Dendritic cell treated with granulocyte-macrophage colony-stimulating factor and Interleukin-4, amounts not matched to agents 40 ng/mL and 50 ng/mL, for 4 days (primary cell): ENCODE measurements at regions of chr2 and their contacts with region 1.

Region 1: GRCh38 chr2:95345566-95346230 is 48.6 kb downstream of the KCNIP3 start:
- H3K4me3 Mint-ChIP-seq: peak overlapping the region; percentile 79
- H3K27ac Mint-ChIP-seq: peak overlapping the region; percentile 32
- H3K4me1 Mint-ChIP-seq: peaks cover 9% of the 10 kb centered on the region
- H3K27me3 Mint-ChIP-seq: peaks cover 58% of the 10 kb centered on the region

Region 2: GRCh38 chr2:95259765-95260417 is 85.8 kb before region 1 on chr2:
- intact Hi-C with region 1: no loop called
- H3K4me3 Mint-ChIP-seq: no peak overlapping the region
- H3K27ac Mint-ChIP-seq: peak overlapping the region; percentile 0
- H3K4me1 Mint-ChIP-seq: peaks cover 33% of the 10 kb centered on the region
- H3K27me3 Mint-ChIP-seq: peaks cover 4% of the 10 kb centered on the region

Region 3: GRCh38 chr2:95402370-95403203 is 56.9 kb after region 1 on chr2 and contains the start of gene FAHD2A:
- intact Hi-C with region 1: loop called (anchors 2 kb)
- H3K4me3 Mint-ChIP-seq: peak within 1 kb of the TSS; percentile 87
- H3K27ac Mint-ChIP-seq: peak within 1 kb of the TSS; percentile 94
- H3K4me1 Mint-ChIP-seq: peaks cover 17% of the 10 kb centered on the region
- H3K27me3 Mint-ChIP-seq: peaks cover 4% of the 10 kb centered on the region